ENCODE measurements at regions of chr6 and their contacts with region 1.

Region 1: DNA sequence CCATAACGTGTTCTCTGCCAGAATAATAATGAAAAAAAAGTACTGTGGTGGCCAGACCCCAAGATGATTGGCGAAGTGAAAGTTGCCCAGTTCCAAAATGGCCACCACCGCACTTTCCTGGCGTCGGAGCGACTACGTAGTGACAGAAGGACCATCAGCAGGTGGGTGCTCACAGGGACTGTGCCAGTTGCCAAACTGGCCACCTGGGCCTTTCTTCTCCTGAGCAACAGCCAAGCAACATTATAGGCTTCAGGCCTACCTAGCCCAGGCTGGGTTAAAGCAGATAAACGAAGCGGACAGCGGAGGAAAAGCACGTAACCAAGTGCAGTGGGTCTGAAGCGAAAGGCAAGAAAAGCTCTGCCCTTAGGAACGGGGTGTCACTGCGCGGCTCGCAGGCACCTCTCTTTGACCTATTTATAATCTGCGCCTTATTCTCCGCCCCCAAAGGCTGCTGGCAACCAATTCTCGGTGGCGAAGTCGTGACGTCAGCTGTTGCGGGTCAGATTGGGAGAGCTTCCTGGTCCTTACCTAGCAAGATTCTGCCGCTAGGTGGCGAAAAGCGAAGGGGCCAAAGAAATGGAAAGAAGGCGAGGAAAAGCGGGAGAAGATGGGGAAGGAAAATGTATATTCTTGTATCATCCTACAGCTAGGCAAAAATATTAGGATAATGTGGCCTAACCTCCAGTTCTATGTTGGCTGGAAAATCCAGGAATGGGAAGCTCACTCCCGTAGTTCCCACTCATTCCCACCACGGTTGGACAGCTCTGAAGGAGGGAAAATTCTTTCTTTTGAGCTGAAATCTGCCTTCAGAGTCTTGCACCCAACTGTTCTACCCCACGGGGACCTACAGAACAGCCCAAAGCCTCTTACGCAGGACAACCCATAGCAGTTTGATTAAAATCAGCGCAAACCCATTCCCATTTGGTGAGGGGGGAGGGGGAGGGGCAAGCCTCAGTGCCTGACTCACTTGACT is 6.9 kb upstream of the MOG start:
- H3K4me3 ChIP-seq: peak overlapping the region; percentile 61
- H3K27ac ChIP-seq: peak overlapping the region; percentile 18; the same call in 1 of the 2 replicates
- H3K4me1 ChIP-seq: no peaks in the 10 kb centered on the region; the same call in 1 of the 2 replicates
- CTCF ChIP-seq: peak; percentile 93

Region 2: DNA sequence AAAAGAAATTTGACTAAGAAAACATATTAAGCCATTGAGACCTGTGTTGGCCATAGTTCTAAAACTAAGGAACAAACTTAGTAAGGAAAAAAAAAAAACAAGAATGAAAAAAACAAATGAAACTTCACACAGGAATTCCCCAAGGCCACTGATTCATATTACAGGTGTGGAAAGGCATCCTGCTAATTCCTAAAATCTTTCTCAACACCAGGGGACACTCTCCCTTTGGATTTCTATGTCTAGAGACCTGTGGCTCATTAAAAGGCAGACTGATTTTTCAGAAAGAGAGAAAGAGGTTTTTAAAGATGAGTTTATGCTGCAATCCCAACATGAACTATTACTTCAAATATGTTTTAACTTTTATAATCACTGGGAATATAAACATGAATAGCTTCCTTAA is 235.4 kb before region 1 on chr6 and contains the start of gene OR12D1:
- CTCF ChIA-PET with region 1: interaction called, 13 read pairs
- POLR2A ChIA-PET with region 1: no interaction called
- H3K4me3 ChIP-seq: no peak within 1 kb of the TSS
- H3K27ac ChIP-seq: no peak within 1 kb of the TSS
- H3K4me1 ChIP-seq: no peaks in the 10 kb centered on the region
- CTCF ChIP-seq: no peak; the same call in 1 of the 2 replicates

Region 3: DNA sequence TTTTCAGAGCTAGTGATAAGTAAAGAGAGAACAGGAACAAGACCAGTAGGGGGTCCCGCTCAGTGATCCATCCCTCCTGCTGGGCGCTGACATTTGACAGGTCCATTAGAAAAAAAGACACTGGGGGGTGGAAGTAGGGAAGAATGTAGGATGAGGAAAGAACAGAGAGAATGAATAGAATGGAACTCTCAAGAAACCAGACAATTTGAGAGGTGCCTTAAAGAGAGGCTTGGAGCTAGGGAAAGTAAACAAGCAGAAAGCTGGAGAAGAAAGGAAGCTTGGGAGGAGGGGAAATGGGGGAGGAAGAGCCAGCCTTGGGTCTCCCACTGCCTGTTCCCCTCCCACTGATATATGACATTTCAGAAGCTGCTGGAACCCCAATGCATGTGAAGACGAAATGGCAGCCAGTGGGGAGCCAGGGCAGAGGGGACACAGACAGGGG is 25.4 kb before region 1 on chr6:
- CTCF ChIA-PET with region 1: interaction called, 19 read pairs
- POLR2A ChIA-PET with region 1: interaction called, 18 read pairs
- H3K4me3 ChIP-seq: no peak overlapping the region
- H3K27ac ChIP-seq: no peak overlapping the region; the same call in 1 of the 2 replicates
- H3K4me1 ChIP-seq: peaks cover 13% of the 10 kb centered on the region
- CTCF ChIP-seq: no peak

Region 4: DNA sequence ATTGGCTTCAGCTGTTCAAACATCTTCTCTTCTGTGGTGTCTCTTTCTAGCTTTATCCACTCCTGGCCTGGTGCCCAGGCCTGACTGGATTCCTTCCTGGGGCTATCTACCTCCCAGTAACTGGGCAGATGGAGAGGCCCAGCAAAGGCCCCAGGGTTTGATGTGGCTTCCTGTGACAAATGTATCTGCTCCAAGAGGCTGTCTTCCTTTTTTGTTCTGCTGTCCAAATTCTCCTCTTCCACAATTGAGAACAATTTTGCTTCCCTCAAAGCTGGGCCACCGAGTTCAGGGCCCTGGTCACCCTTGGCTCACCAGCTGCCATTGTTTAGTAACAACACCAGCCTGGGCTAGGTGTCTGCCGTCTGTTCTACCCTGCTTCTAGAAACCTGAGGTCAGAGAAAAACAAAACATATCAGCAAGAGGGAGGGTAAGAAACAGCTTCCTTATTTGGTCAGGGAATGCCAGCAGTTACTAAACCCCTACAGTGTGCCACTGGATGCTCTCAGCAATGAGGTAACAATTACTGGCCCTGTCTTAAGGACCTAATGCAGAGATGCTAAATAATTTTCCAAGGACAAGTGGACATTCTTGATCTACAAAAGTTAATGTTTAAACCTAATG is 27.1 kb after region 1 on chr6:
- CTCF ChIA-PET with region 1: interaction called, 42 read pairs
- POLR2A ChIA-PET with region 1: interaction called, 4 read pairs
- H3K4me3 ChIP-seq: no peak overlapping the region
- H3K27ac ChIP-seq: no peak overlapping the region
- H3K4me1 ChIP-seq: no peaks in the 10 kb centered on the region
- CTCF ChIP-seq: no peak

Region 5: DNA sequence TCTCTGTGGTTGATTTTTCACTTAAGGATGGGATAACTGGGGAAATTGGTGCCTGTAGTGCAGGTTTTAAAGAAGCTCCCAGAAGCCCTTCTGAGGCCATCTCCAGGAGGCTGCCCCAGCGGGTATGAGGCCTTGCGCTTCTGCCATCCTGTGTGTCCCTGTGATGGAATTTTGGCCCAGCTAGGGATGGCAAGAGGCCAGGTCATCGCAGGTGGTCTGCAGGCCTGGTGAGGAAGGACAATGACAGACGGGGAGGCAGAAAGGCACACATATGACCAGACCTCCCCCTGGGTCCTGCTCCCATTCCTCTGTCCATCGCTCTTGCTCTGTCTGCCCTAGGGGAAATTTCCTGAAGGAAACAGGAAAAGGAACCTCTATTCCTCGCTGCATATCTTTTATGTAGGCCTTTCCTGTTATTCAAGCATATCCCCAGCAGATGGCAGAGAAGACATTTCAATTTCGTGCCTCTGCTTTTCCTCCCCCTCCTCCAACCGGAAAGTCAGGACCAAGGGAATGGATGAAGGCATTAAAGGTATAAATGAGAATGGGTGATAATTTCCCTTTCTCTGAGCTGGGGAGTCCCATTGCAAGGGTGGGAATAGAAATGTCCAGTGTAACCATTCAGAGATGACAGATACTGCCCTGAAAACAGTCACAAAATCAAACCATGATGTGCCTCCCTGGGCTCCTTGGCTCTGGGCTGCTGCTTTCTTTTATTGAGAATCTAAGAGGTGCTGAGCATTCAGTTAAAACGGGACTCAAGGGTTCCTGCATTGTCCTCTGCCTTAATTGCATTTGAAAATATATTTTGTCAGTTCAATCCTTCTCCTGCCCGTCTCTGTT is 55.6 kb after region 1 on chr6:
- CTCF ChIA-PET with region 1: interaction called, 39 read pairs
- POLR2A ChIA-PET with region 1: no interaction called
- H3K4me3 ChIP-seq: no peak overlapping the region
- H3K27ac ChIP-seq: no peak overlapping the region
- H3K4me1 ChIP-seq: no peaks in the 10 kb centered on the region
- CTCF ChIP-seq: peak; percentile 62

Region 6: DNA sequence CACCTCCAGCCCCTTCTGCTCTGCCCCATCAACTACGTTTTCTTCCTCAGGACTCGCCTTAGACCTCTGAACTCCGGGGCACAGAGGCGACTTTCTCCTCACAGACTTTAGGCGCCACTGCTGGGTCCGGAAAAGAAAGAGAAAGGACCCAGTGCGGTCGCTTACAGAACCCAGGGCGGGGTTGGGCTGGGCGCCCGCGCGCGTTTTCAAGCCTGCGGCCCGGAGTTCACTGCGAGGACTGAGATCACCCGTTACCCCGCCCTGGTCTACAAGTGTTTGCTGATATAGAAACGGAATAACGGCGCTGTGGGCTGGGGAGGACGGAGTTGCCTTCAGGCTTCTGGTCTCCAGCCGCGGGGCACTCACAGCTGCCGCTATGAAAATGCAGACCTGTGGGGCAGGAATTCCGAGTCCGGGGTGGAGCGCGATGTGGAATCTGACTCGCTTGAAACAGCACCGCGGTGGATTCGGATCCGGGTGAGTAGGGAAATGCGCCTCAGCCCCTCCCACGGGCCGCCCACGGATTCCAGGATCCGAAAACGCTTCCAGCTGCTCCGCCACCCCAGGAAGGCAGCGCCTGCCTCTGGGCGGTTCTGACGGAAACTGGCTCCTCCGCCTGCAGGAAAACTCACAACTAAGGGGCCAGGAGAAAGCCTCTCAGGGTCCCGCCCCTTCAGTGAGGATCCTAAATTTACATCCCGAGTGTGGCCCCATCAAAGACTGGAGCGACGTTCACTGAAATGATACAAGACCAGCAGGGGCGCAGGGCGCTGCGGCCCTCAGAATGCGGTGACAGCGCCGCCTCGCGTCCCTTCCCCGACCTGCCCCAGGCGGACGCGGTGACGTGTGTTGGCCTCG is 102.7 kb after region 1 on chr6:
- CTCF ChIA-PET with region 1: interaction called, 14 read pairs
- POLR2A ChIA-PET with region 1: interaction called, 5 read pairs
- H3K4me3 ChIP-seq: peak overlapping the region; percentile 75
- H3K27ac ChIP-seq: peak overlapping the region; percentile 46; the same call in 1 of the 2 replicates
- H3K4me1 ChIP-seq: peaks cover 5% of the 10 kb centered on the region; the same call in 1 of the 2 replicates
- CTCF ChIP-seq: peak; percentile 99

Measured in HEK293 (cell line).